Naive thymus-derived CD4-positive, alpha-beta T cell (primary cell): ENCODE measurements at regions of chr22 and their contacts with region 1.

Region 1: DNA sequence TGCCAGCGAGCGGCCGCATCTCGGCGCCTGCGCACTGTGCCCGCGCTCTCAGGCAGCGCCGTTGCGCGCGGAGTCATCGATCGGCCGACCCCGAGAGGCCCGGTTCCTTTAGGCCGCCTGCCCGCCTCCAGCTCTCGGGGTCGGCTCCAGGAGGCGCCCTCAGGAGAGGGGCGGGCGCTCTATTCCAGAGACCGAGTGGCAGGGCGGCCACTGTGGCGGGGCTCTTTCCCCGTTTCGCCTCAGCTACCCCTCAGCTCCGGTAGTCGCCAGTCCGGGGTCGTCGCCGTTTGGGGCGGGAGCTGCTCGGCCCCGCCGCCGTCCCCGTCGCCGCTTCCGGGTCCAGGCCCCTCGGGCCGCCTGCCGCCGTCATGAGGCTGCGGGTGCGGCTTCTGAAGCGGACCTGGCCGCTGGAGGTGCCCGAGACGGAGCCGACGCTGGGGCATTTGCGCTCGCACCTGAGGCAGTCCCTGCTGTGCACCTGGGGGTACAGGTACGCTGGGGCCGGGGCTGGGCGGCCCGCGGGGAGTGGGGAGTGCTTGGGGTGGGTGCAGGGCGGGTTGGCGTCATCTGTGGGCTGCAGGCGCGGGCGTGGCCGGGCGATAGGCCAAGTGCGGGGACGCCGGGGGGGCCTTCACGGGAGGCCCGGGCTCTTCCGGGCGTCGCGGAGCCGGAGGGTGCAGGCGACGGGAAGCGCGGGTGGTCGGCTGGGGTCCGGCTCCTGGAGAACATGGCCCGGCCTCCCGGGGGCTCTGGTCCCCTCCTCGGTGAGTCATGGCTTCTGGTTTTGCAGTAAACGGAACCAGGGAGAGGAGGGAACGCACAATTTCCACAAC is at the start of gene FBXO7:
- DNase-seq: peak; percentile 80 to 89 (median 85)
- ATAC-seq: peak; percentile 91
- H3K4me3 ChIP-seq: peak within 1 kb of the TSS; percentile 77
- H3K4me3 Mint-ChIP-seq: peak within 1 kb of the TSS in 9 of 10 donors; percentile 88 to 98 (median 96)
- H3K27ac ChIP-seq: peak within 1 kb of the TSS; percentile 97
- H3K27ac Mint-ChIP-seq: peak within 1 kb of the TSS; percentile 88 to 97 (median 93)
- H3K4me1 ChIP-seq: peaks cover 24 to 27% of the 10 kb centered on the region in 2 donors
- H3K4me1 Mint-ChIP-seq: peaks cover 11 to 34% (median 22%) of the 10 kb centered on the region in 7 donors
- H3K27me3 ChIP-seq: no peaks in the 10 kb centered on the region
- H3K27me3 Mint-ChIP-seq: peaks cover 0 to 4% (median 0%) of the 10 kb centered on the region in 5 donors
- total RNA-seq, gene FBXO7: 86.4 to 120 (median 98.2) TPM

Region 2: DNA sequence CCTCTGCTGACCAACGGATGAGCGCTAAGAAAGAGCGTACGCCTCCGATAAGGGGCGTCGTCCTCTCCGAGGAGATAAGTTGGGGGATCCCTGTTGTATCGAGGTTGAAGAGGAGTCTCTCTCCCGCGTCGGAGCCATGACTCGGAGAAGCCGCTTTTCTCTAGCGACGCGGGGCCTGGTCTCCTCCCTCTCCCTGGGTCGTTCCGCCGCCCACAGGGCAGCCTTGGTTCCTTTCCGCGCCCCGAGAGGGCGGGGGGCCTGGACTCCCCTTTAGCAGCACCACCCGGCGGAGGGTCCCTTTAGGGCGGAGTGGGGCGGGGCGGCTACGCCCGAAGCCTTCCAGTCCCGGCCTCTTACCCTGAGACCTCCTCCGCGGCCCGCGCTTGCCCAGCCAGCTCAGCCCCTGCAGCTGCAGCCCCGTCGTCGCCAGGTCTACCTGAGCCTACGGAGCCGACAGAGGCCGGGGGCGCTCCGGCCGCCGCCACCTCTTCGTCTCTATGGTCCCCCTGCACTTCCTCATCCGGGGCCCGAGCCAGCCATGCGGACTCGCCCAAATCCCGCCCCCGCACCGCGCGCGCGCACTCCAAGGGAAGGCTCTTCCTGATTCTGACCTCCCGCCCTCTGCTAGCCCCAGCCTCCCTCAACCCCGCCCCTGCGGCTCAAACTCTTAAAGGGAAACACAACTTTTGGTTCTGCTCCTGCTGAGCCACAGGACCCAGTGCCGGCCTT is 725.1 kb before region 1 on chr22 and contains the start of gene PRR14L:
- CTCF ChIA-PET with region 1: no interaction called
- POLR2A ChIA-PET with region 1: interaction called, 3 read pairs
- intact Hi-C with region 1: loop called (anchors 5 to 10 kb)
- DNase-seq: peak; percentile 94 to 100 (median 98)
- ATAC-seq: peak; percentile 86
- H3K4me3 ChIP-seq: peak within 1 kb of the TSS; percentile 92
- H3K4me3 Mint-ChIP-seq: peak within 1 kb of the TSS; percentile 87 to 97 (median 94)
- H3K27ac ChIP-seq: peak within 1 kb of the TSS; percentile 83
- H3K27ac Mint-ChIP-seq: peak within 1 kb of the TSS; percentile 82 to 98 (median 96)
- H3K4me1 ChIP-seq: peaks cover 31 to 37% of the 10 kb centered on the region in 2 donors
- H3K4me1 Mint-ChIP-seq: peaks cover 36 to 65% (median 59%) of the 10 kb centered on the region in 7 donors
- H3K27me3 ChIP-seq: no peaks in the 10 kb centered on the region
- H3K27me3 Mint-ChIP-seq: peaks cover 0 to 2% (median 0%) of the 10 kb centered on the region in 5 donors
- total RNA-seq, gene PRR14L: 43.1 to 82.6 (median 66.9) TPM

Region 3: GRCh38 chr22:31977141-31977841 is 497.6 kb before region 1 on chr22:
- CTCF ChIA-PET with region 1: interaction called, 5 read pairs
- POLR2A ChIA-PET with region 1: no interaction called
- intact Hi-C with region 1: loop called (anchors 1 kb)
- DNase-seq: peak; percentile 53 to 77 (median 70)
- ATAC-seq: peak; percentile 91
- H3K4me3 ChIP-seq: no peak overlapping the region
- H3K4me3 Mint-ChIP-seq: no peak overlapping the region
- H3K27ac ChIP-seq: no peak overlapping the region
- H3K27ac Mint-ChIP-seq: peak overlapping the region in 2 of 9 donors; percentile 50 to 60
- H3K4me1 ChIP-seq: no peaks in the 10 kb centered on the region
- H3K4me1 Mint-ChIP-seq: peaks cover 0 to 7% (median 0%) of the 10 kb centered on the region in 7 donors
- H3K27me3 ChIP-seq: no peaks in the 10 kb centered on the region
- H3K27me3 Mint-ChIP-seq: peaks cover 0 to 18% (median 0%) of the 10 kb centered on the region in 5 donors

Region 4: DNA sequence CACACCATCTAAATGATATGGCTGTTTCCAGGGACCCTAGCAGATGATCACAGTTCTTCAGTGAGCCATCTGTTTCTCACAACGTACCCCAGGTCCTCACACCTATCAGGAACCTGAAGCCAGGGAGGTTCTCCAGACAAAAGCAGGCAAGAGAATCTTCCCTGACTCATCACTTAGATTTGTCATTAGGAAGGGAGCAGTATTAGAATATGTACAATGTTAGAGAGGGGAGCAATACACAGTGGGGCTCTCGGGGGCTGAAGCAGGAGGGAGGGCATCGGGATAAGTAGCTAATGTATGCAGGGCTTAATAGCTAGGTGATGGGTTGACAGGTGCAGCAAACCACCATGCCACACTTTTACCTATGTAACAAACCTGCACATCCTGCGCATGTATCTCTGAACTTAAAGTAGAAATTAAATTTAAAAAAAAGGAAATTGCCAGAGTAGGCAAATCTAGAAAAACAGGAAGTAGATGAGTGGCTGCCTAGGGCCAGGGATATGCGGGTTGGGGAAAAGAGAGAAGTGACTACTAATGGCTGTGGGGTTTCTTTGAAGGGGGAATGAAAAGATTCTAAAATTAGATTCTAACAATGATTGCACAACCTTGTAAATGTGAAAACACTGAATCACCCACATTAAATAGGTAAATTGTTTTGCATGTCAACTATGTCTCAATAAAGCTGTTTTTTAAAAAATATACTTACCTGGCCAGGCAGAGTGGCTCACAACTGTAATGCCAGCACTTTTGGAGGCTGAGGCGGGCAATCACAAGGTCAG is 330.2 kb before region 1 on chr22:
- CTCF ChIA-PET with region 1: interaction called, 3 read pairs
- POLR2A ChIA-PET with region 1: no interaction called
- intact Hi-C with region 1: loop called in 1 of 2 experiments (anchors 5 kb)
- DNase-seq: peak in 6 of 9 donors; percentile 16 to 62 (median 36)
- ATAC-seq: peak; percentile 83
- H3K4me3 ChIP-seq: no peak overlapping the region
- H3K4me3 Mint-ChIP-seq: peak overlapping the region in 7 of 10 donors; percentile 1 to 61 (median 26)
- H3K27ac ChIP-seq: no peak overlapping the region
- H3K27ac Mint-ChIP-seq: peak overlapping the region; percentile 1 to 90 (median 40)
- H3K4me1 ChIP-seq: peaks cover 0 to 8% of the 10 kb centered on the region in 2 donors
- H3K4me1 Mint-ChIP-seq: peaks cover 22 to 52% (median 36%) of the 10 kb centered on the region in 7 donors
- H3K27me3 ChIP-seq: no peaks in the 10 kb centered on the region
- H3K27me3 Mint-ChIP-seq: peaks cover 0 to 4% (median 0%) of the 10 kb centered on the region in 5 donors

Region 5: DNA sequence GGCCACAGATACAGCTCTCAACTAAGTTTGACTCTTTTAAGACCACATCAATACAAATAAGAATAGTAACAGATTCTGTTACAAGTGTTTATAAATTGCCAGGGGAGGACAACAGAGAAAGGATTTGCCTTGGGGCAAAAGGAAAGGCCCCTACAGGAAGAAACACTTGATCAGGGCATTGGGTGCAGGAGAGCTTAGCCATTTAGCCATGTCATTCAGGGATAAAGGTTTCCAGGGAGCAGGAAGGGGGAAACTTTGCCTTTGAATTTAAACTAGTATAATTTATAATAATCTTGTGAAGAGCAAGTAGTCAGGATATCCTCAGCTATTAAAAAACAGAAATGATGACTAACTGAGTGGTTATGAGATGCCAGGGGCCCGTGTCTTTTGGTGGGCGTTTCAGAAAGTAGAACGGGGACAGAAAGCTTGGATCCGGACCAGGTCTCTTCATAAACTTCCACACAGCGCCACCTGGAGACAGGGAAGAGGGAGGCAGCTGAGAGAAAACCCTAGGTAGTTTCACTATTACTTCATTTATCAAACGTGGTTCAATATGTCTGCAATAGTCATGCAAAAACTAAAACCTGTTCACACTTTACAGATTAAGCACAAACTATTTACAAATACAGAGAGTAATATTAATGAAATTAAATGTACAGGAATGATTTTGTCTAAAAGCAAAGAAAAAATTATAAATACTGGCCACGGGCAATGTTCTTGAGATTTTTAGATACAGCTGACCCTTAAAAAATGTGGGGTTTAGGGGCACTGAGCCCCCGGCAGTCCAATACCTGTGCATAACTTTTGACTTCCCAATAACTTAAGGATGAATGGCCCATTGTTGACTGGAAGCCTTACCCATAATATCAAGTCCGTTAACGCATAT is 208.7 kb before region 1 on chr22:
- CTCF ChIA-PET with region 1: no interaction called
- POLR2A ChIA-PET with region 1: no interaction called
- intact Hi-C with region 1: loop called (anchors 1 to 5 kb)
- DNase-seq: peak; percentile 11 to 66 (median 56)
- ATAC-seq: peak; percentile 75
- H3K4me3 ChIP-seq: no peak overlapping the region
- H3K4me3 Mint-ChIP-seq: peak overlapping the region in 6 of 10 donors; percentile 8 to 55 (median 30)
- H3K27ac ChIP-seq: no peak overlapping the region
- H3K27ac Mint-ChIP-seq: peak overlapping the region in 1 of 9 donors; percentile 28
- H3K4me1 ChIP-seq: no peaks in the 10 kb centered on the region
- H3K4me1 Mint-ChIP-seq: peaks cover 0 to 11% (median 7%) of the 10 kb centered on the region in 7 donors
- H3K27me3 ChIP-seq: no peaks in the 10 kb centered on the region
- H3K27me3 Mint-ChIP-seq: peaks cover 2 to 8% (median 6%) of the 10 kb centered on the region in 5 donors

Region 6: DNA sequence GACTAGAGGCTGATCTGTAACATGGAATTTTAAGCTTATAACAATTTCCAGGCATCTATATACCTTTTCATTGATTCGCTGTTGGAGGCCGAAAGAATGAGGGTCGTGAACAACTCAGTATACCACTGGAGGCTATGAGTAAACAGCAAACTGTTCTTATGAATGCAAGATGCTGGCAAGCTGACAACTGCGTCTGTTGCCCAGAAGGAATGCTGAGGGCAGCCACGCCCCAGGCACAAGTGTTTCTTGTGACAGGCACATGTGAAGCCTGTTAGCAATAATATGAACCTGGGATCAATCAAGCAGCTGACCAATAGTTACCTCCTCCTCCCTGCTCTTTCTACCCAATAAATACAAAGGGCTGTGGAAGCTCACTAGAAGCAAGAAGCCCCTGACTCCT is 78.1 kb before region 1 on chr22:
- CTCF ChIA-PET with region 1: no interaction called
- POLR2A ChIA-PET with region 1: no interaction called
- intact Hi-C with region 1: no loop called
- DNase-seq: no peak
- ATAC-seq: no peak
- H3K4me3 ChIP-seq: no peak overlapping the region
- H3K4me3 Mint-ChIP-seq: no peak overlapping the region
- H3K27ac ChIP-seq: no peak overlapping the region
- H3K27ac Mint-ChIP-seq: peak overlapping the region in 1 of 9 donors; percentile 41
- H3K4me1 ChIP-seq: no peaks in the 10 kb centered on the region
- H3K4me1 Mint-ChIP-seq: peaks cover 0 to 6% (median 0%) of the 10 kb centered on the region in 7 donors
- H3K27me3 ChIP-seq: no peaks in the 10 kb centered on the region
- H3K27me3 Mint-ChIP-seq: no peaks in the 10 kb centered on the region

Region 7: GRCh38 chr22:32423664-32424063 is 51.2 kb before region 1 on chr22:
- CTCF ChIA-PET with region 1: no interaction called
- POLR2A ChIA-PET with region 1: no interaction called
- intact Hi-C with region 1: no loop called
- DNase-seq: no peak
- ATAC-seq: no peak
- H3K4me3 ChIP-seq: no peak overlapping the region
- H3K4me3 Mint-ChIP-seq: no peak overlapping the region
- H3K27ac ChIP-seq: no peak overlapping the region
- H3K27ac Mint-ChIP-seq: no peak overlapping the region
- H3K4me1 ChIP-seq: no peaks in the 10 kb centered on the region
- H3K4me1 Mint-ChIP-seq: peaks cover 0 to 5% (median 0%) of the 10 kb centered on the region in 7 donors
- H3K27me3 ChIP-seq: no peaks in the 10 kb centered on the region
- H3K27me3 Mint-ChIP-seq: peaks cover 23 to 40% (median 37%) of the 10 kb centered on the region in 5 donors

Region 8: GRCh38 chr22:32764330-32765131 is 289.7 kb after region 1 on chr22:
- CTCF ChIA-PET with region 1: no interaction called
- POLR2A ChIA-PET with region 1: no interaction called
- intact Hi-C with region 1: no loop called
- DNase-seq: no peak
- ATAC-seq: no peak
- H3K4me3 ChIP-seq: no peak overlapping the region
- H3K4me3 Mint-ChIP-seq: no peak overlapping the region
- H3K27ac ChIP-seq: no peak overlapping the region
- H3K27ac Mint-ChIP-seq: peak overlapping the region in 1 of 9 donors; percentile 22
- H3K4me1 ChIP-seq: no peaks in the 10 kb centered on the region
- H3K4me1 Mint-ChIP-seq: peaks cover 0 to 4% (median 0%) of the 10 kb centered on the region in 7 donors
- H3K27me3 ChIP-seq: peaks cover 0 to 3% of the 10 kb centered on the region in 2 donors
- H3K27me3 Mint-ChIP-seq: peaks cover 22 to 38% (median 27%) of the 10 kb centered on the region in 5 donors

Region 9: DNA sequence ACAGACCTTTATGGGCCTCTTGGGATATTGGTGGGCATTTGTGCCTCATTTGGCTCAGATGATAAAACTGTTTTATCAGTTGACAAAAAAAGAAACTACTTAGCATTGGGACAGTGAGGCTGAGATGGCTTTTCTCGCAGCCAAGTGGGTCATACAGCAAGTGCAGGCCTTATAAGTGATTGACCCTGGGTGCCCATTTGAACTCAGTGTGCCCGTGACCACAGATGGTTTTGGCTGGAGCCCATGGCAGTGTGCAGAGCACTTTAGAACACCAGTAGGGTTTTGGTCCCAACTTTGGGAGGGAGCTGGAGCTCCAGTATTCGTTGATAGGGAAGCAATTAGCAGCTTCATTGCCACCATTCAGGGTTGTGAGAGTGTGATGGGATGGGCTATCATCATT is 1849.9 kb after region 1 on chr22:
- CTCF ChIA-PET with region 1: no interaction called
- POLR2A ChIA-PET with region 1: no interaction called
- intact Hi-C with region 1: no loop called
- DNase-seq: no peak
- ATAC-seq: no peak
- H3K4me3 ChIP-seq: no peak overlapping the region
- H3K4me3 Mint-ChIP-seq: no peak overlapping the region
- H3K27ac ChIP-seq: no peak overlapping the region
- H3K27ac Mint-ChIP-seq: no peak overlapping the region
- H3K4me1 ChIP-seq: no peaks in the 10 kb centered on the region
- H3K4me1 Mint-ChIP-seq: no peaks in the 10 kb centered on the region
- H3K27me3 ChIP-seq: no peaks in the 10 kb centered on the region
- H3K27me3 Mint-ChIP-seq: peaks cover 0 to 6% (median 0%) of the 10 kb centered on the region in 5 donors